ENCODE measurements at regions of chr7 and their contacts with region 1.

Region 1: DNA sequence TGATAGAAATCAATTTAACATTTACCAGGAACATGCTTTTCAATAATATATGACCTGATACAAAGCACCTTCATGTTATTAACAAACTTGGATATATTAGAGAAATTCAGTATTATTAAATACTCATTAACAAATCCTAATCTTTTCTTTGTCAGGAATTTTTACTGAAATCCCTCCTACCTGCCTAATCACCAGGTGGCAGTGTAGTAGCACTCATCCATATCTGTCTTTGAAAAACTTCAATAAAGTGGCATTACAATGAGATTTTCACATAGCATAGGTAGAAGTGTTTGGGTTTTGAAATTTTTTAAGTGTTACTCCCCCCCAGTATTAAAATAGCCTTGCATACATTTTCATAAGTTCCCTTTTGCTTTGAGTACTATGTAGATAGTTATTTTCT is 1246.6 kb upstream of the LRRN3 start:
- DNase-seq: peak; percentile 33
- H3K4me3 Mint-ChIP-seq: no peak overlapping the region
- H3K27ac Mint-ChIP-seq: no peak overlapping the region
- H3K4me1 Mint-ChIP-seq: no peaks in the 10 kb centered on the region
- H3K27me3 Mint-ChIP-seq: peaks cover 46% of the 10 kb centered on the region
- CTCF ChIP-seq: peak; percentile 61

Region 2: GRCh38 chr7:109864230-109864629 is 19.9 kb after region 1 on chr7:
- CTCF ChIA-PET with region 1: interaction called, 12 read pairs
- POLR2A ChIA-PET with region 1: no interaction called
- intact Hi-C with region 1: no loop called
- DNase-seq: no peak
- H3K4me3 Mint-ChIP-seq: no peak overlapping the region
- H3K27ac Mint-ChIP-seq: no peak overlapping the region
- H3K4me1 Mint-ChIP-seq: no peaks in the 10 kb centered on the region
- H3K27me3 Mint-ChIP-seq: peaks cover 20% of the 10 kb centered on the region
- CTCF ChIP-seq: no peak

Region 3: GRCh38 chr7:109901926-109902325 is 57.6 kb after region 1 on chr7:
- CTCF ChIA-PET with region 1: no interaction called
- POLR2A ChIA-PET with region 1: no interaction called
- intact Hi-C with region 1: no loop called
- DNase-seq: peak; percentile 13
- H3K4me3 Mint-ChIP-seq: no peak overlapping the region
- H3K27ac Mint-ChIP-seq: no peak overlapping the region
- H3K4me1 Mint-ChIP-seq: peaks cover 7% of the 10 kb centered on the region
- H3K27me3 Mint-ChIP-seq: no peaks in the 10 kb centered on the region
- CTCF ChIP-seq: no peak

Region 4: GRCh38 chr7:110204527-110204926 is 360.2 kb after region 1 on chr7:
- CTCF ChIA-PET with region 1: no interaction called
- POLR2A ChIA-PET with region 1: no interaction called
- intact Hi-C with region 1: loop called (anchors 1 kb)
- DNase-seq: peak; percentile 30
- H3K4me3 Mint-ChIP-seq: no peak overlapping the region
- H3K27ac Mint-ChIP-seq: no peak overlapping the region
- H3K4me1 Mint-ChIP-seq: no peaks in the 10 kb centered on the region
- H3K27me3 Mint-ChIP-seq: no peaks in the 10 kb centered on the region
- CTCF ChIP-seq: no peak

Region 5: DNA sequence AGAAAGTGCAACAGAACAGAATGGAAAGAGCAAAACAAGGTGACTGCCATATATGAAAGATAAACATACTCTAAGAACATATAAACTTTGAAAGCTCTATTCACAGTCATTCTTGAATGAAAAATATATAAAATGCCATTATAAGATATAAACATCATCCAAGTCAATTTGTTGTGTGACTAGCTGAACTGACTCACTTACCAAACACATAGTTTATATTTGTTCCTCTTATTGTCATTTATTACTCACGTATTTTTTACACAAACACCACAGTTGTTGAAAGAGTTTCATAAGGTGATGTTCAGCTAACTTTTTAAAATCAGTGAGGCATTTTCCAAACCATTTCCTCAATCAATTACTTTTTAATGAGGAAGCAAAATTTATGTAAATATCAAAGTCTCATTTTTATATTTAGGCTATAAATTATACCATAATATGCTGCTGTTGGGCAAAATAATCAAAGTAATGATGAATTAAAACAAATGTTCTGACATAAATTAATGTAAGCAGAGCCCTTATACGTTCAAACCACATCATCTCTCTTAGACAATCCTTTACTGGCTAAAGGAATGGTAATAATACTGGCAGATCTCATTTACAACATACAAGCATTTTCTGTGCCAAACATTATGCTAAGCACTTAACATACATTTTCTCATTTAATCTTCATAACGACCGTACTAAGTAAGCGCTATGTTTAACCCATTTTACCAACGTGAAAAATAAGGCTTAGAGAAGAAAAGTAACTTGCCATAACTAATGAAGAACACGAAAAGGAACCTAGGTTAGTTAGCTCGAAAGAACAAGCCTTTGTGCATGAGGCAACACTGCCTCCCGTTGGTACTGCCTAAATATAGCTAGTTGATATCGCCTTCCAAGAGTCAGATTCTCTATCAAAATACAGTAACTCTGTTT is 1253.9 kb after region 1 on chr7:
- CTCF ChIA-PET with region 1: interaction called, 4 read pairs
- POLR2A ChIA-PET with region 1: no interaction called
- intact Hi-C with region 1: loop called (anchors 10 kb)
- DNase-seq: peak; percentile 46
- H3K4me3 Mint-ChIP-seq: no peak overlapping the region
- H3K27ac Mint-ChIP-seq: no peak overlapping the region
- H3K4me1 Mint-ChIP-seq: no peaks in the 10 kb centered on the region
- H3K27me3 Mint-ChIP-seq: no peaks in the 10 kb centered on the region
- CTCF ChIP-seq: peak; percentile 53

Region 6: GRCh38 chr7:111735661-111736551 is 1891.5 kb after region 1 on chr7:
- CTCF ChIA-PET with region 1: interaction called, 6 read pairs
- POLR2A ChIA-PET with region 1: no interaction called
- intact Hi-C with region 1: loop called (anchors 2 kb)
- DNase-seq: peak; percentile 79
- H3K4me3 Mint-ChIP-seq: no peak overlapping the region
- H3K27ac Mint-ChIP-seq: no peak overlapping the region
- H3K4me1 Mint-ChIP-seq: no peaks in the 10 kb centered on the region
- H3K27me3 Mint-ChIP-seq: no peaks in the 10 kb centered on the region
- CTCF ChIP-seq: peak; percentile 91